ENCODE measurements at regions of chr1 and their contacts with region 1.

Region 1: DNA sequence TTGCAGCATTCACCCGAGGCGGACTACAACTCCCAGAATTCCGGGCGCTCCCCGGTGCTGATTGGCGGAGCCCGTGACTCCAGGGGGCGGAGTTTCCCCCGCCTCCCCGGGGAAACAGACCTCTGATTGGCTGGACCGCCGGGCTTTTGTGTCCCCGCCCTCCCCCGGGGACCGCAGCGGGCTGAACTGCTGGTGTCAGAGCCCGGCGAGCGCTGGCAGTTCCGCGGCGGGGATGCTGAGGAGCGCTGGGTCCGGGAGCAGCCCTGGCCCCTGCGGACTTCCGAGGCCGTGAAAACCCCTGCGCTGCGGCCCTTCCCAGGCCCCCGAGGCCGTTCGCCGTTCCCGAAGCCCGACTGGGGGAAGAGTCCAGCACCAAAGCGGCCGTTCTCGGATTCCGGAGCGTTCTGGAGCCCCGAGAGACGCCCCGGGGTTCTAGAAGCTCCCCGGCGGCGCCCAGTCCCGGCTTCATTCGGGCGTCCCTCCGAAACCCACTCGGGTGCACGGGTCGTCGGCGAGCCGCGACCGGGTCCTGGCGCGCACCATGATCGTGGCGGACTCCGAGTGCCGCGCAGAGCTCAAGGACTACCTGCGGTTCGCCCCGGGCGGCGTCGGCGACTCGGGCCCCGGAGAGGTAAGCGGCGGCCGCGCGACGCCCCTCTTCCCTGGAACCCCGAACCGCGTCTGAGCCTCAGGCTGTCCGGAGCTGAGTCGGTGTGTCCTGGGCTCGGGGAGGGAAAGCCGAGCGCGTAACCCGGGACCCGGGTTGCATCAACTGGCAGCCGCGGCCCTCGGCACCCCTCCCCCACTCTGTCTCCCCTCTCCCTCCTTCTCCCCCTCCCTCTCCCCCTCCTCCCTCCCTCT is at the start of gene SESN2:
- DNase-seq: peak; percentile 97 to 99 (median 99)
- ATAC-seq: peak; percentile 95 to 97
- H3K4me3 Mint-ChIP-seq: peak within 1 kb of the TSS; percentile 75 to 90 (median 80)
- H3K27ac Mint-ChIP-seq: peak within 1 kb of the TSS; percentile 57 to 89 (median 82)
- H3K4me1 Mint-ChIP-seq: peaks cover 19 to 54% (median 39%) of the 10 kb centered on the region in 4 donors
- H3K27me3 Mint-ChIP-seq: peaks cover 0 to 4% (median 0%) of the 10 kb centered on the region in 5 donors
- polyA plus RNA-seq, gene SESN2: 1.6 to 8.2 (median 4.7) TPM

Region 2: GRCh38 chr1:28235755-28236655 is 23.5 kb before region 1 on chr1 and contains the start of gene ATP5IF1:
- POLR2A ChIA-PET with region 1: interaction called, 10 read pairs
- DNase-seq: peak; percentile 84 to 97 (median 94)
- ATAC-seq: peak; percentile 95
- H3K4me3 Mint-ChIP-seq: peak within 1 kb of the TSS in 1 of 10 donors; percentile 29
- H3K27ac Mint-ChIP-seq: no peak within 1 kb of the TSS
- H3K4me1 Mint-ChIP-seq: peaks cover 8 to 28% (median 18%) of the 10 kb centered on the region in 4 donors
- H3K27me3 Mint-ChIP-seq: no peaks in the 10 kb centered on the region
- polyA plus RNA-seq, gene ATP5IF1: 468 to 666 (median 606) TPM

Region 3: DNA sequence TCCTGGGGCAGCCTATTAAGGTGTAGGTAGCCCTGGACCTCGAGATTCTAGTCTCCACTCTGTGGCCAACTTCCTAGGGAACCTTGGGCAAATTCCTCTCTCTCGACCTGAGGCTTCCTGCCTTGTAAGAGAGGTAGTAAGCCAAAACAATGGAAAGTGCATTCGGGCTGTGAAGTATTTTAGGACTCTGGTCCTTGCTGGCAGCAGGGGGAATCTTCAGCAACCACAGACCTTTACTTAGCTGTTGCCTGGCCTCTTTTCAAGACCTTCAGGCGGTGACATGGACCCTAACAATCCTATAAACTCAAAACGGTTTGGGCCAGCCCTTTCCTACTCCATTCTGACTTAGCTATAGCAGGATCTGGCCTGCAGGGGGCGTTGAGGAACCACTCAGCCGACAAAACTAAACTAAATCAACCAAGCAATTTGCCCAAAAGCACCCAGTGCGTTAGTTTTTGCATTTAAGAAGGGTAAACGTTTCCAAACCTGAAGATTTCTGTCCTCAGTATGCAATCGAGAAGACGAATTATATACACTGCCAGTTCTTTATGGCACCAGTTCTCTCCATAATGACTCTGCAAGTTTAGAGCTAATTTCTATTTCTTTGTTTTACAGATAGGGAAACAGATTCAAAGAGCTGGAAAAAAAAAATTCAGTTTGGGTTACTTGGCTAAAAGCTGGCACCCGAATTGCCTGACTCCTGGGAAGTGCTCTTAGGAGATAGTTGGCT is 11.1 kb before region 1 on chr1:
- POLR2A ChIA-PET with region 1: interaction called, 95 read pairs
- DNase-seq: peak; percentile 61 to 89 (median 78)
- ATAC-seq: peak in 1 of 2 donors; percentile 18
- H3K4me3 Mint-ChIP-seq: peak overlapping the region; percentile 68 to 98 (median 84)
- H3K27ac Mint-ChIP-seq: peak overlapping the region; percentile 92 to 98 (median 94)
- H3K4me1 Mint-ChIP-seq: peaks cover 23 to 59% (median 47%) of the 10 kb centered on the region in 4 donors
- H3K27me3 Mint-ChIP-seq: no peaks in the 10 kb centered on the region